Activated B cell treated with CpG ODN at 0.5 μM for 24 hours (primary cell): ENCODE measurements at regions of chr17 and their contacts with region 1.

Region 1: GRCh38 chr17:58517734-58518609 is 3.5 kb upstream of the MTMR4 start:
- DNase-seq: peak; percentile 95
- ATAC-seq: peak; percentile 79
- H3K4me3 Mint-ChIP-seq: peak overlapping the region; percentile 96
- H3K27ac Mint-ChIP-seq: peak overlapping the region; percentile 97
- H3K4me1 Mint-ChIP-seq: peaks cover 46% of the 10 kb centered on the region
- H3K27me3 Mint-ChIP-seq: no peaks in the 10 kb centered on the region
- CTCF ChIP-seq: no peak

Region 2: GRCh38 chr17:57255776-57256681 is 1261.9 kb before region 1 on chr17 and contains the start of gene MSI2:
- CTCF ChIA-PET with region 1: no interaction called
- POLR2A ChIA-PET with region 1: no interaction called
- intact Hi-C with region 1: loop called (anchors 10 kb)
- DNase-seq: peak; percentile 86
- ATAC-seq: peak; percentile 79
- H3K4me3 Mint-ChIP-seq: peak within 1 kb of the TSS; percentile 94
- H3K27ac Mint-ChIP-seq: peak within 1 kb of the TSS; percentile 88
- H3K4me1 Mint-ChIP-seq: peaks cover 44% of the 10 kb centered on the region
- H3K27me3 Mint-ChIP-seq: no peaks in the 10 kb centered on the region
- CTCF ChIP-seq: no peak
- total RNA-seq, gene MSI2: 93.2 and 102 TPM in 2 replicates

Region 3: DNA sequence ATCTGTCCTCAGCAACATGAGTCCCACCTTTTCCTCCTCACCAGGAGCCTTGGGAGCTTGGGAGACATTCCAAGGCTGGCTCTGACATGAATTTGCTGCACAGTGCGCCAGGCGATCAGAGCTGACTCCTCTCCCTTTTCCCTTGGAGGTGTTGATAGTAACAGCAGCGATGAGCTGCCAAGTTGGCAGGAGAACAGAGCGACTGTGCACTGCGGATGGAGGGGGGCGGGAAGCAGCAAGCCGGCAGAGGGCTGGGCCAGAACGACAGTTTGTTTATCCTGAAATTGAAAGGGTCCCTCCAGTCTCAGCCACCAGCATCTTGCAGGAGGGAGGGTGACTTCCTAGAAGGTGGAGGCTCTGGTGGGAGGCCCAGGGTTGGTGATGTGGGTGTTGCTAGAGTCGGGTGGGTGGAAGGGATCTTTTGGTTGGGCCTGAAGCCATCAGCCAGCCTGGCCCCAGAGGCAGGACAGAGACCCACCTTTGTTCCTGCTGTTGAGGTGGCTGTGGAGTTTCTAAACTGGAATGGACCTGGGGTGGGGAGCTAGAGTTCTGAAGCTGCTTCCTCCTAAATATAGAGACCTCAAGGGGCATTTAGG is 457.3 kb before region 1 on chr17:
- CTCF ChIA-PET with region 1: no interaction called
- POLR2A ChIA-PET with region 1: no interaction called
- intact Hi-C with region 1: no loop called
- DNase-seq: no peak
- ATAC-seq: no peak
- H3K4me3 Mint-ChIP-seq: no peak overlapping the region
- H3K27ac Mint-ChIP-seq: no peak overlapping the region
- H3K4me1 Mint-ChIP-seq: no peaks in the 10 kb centered on the region
- H3K27me3 Mint-ChIP-seq: peaks cover 5% of the 10 kb centered on the region
- CTCF ChIP-seq: no peak

Region 4: GRCh38 chr17:58352014-58352842 is 165.7 kb before region 1 on chr17 and contains the start of gene SUPT4H1:
- CTCF ChIA-PET with region 1: interaction called, 4 read pairs
- POLR2A ChIA-PET with region 1: interaction called, 8 read pairs
- intact Hi-C with region 1: loop called (anchors 1 kb)
- DNase-seq: peak; percentile 91
- ATAC-seq: peak; percentile 92
- H3K4me3 Mint-ChIP-seq: peak within 1 kb of the TSS; percentile 100
- H3K27ac Mint-ChIP-seq: peak within 1 kb of the TSS; percentile 97
- H3K4me1 Mint-ChIP-seq: peaks cover 49% of the 10 kb centered on the region
- H3K27me3 Mint-ChIP-seq: no peaks in the 10 kb centered on the region
- CTCF ChIP-seq: no peak
- total RNA-seq, gene SUPT4H1: 90.2 and 100 TPM in 2 replicates

Region 5: GRCh38 chr17:58587702-58588254 is 69.8 kb after region 1 on chr17:
- CTCF ChIA-PET with region 1: interaction called, 8 read pairs
- POLR2A ChIA-PET with region 1: interaction called, 3 read pairs
- intact Hi-C with region 1: loop called (anchors 1 kb)
- DNase-seq: peak; percentile 21
- ATAC-seq: peak; percentile 86
- H3K4me3 Mint-ChIP-seq: no peak overlapping the region
- H3K27ac Mint-ChIP-seq: no peak overlapping the region
- H3K4me1 Mint-ChIP-seq: peaks cover 3% of the 10 kb centered on the region
- H3K27me3 Mint-ChIP-seq: no peaks in the 10 kb centered on the region
- CTCF ChIP-seq: no peak

Region 6: GRCh38 chr17:58741121-58741625 is 223.2 kb after region 1 on chr17:
- CTCF ChIA-PET with region 1: no interaction called
- POLR2A ChIA-PET with region 1: no interaction called
- intact Hi-C with region 1: no loop called
- DNase-seq: no peak
- ATAC-seq: no peak
- H3K4me3 Mint-ChIP-seq: no peak overlapping the region
- H3K27ac Mint-ChIP-seq: no peak overlapping the region
- H3K4me1 Mint-ChIP-seq: no peaks in the 10 kb centered on the region
- H3K27me3 Mint-ChIP-seq: no peaks in the 10 kb centered on the region
- CTCF ChIP-seq: no peak

Region 7: GRCh38 chr17:59004338-59005111 is 486.6 kb after region 1 on chr17:
- CTCF ChIA-PET with region 1: interaction called, 35 read pairs
- POLR2A ChIA-PET with region 1: interaction called, 26 read pairs
- intact Hi-C with region 1: loop called (anchors 1 kb)
- DNase-seq: peak; percentile 35
- ATAC-seq: peak; percentile 35
- H3K4me3 Mint-ChIP-seq: no peak overlapping the region
- H3K27ac Mint-ChIP-seq: peak overlapping the region; percentile 79
- H3K4me1 Mint-ChIP-seq: peaks cover 29% of the 10 kb centered on the region
- H3K27me3 Mint-ChIP-seq: no peaks in the 10 kb centered on the region
- CTCF ChIP-seq: no peak

Region 8: DNA sequence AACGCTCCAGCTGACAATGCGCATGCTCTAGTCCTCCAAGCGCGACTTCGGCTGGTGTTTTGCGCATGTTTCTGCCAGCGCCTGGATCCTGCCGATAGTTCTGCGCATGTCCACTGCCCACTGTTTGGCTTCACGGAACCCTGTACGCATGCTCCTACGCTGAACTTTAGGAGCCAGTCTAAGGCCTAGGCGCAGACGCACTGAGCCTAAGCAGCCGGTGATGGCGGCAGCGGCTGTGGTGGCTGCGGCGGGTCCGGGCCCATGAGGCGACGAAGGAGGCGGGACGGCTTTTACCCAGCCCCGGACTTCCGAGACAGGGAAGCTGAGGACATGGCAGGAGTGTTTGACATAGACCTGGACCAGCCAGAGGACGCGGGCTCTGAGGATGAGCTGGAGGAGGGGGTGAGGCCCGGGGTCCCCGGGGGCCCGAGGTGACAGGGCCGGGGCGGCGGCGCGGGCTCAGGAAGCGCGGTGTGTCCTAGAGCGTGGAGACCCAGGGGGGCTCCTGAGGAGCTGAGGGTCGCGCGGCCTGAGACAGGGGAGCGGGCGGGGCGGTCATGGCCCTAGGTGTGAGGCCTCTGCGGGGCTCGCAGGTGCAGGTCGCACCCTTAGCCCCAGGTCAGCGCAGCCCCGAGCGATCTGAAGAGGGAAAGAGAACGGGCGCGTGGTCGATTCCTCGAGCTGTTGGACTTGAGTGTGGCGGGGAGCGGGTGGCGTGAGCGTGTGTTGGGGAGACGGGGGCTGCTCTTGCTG is 1375.1 kb after region 1 on chr17 and contains the starts of genes RPS6KB1 and TUBD1:
- CTCF ChIA-PET with region 1: no interaction called
- POLR2A ChIA-PET with region 1: no interaction called
- intact Hi-C with region 1: loop called (anchors 2 kb)
- DNase-seq: peak; percentile 86
- ATAC-seq: peak; percentile 91
- H3K4me3 Mint-ChIP-seq: peak within 1 kb of the TSS; percentile 99
- H3K27ac Mint-ChIP-seq: peak within 1 kb of the TSS; percentile 98
- H3K4me1 Mint-ChIP-seq: peaks cover 44% of the 10 kb centered on the region
- H3K27me3 Mint-ChIP-seq: no peaks in the 10 kb centered on the region
- CTCF ChIP-seq: no peak
- total RNA-seq, gene RPS6KB1: 57.7 and 63.0 TPM in 2 replicates
- total RNA-seq, gene TUBD1: 10.5 and 15.1 TPM in 2 replicates